CD4-positive, alpha-beta memory T cell (primary cell): ENCODE measurements at regions of chr6 and their contacts with region 1.

Region 1: GRCh38 chr6:17599885-17600526 is at the start of gene FAM8A1:
- DNase-seq: peak; percentile 92 to 94 (median 93)
- H3K4me3 ChIP-seq: peak within 1 kb of the TSS; percentile 50 to 64
- H3K4me3 Mint-ChIP-seq: peak within 1 kb of the TSS; percentile 88 to 96 (median 92)
- H3K27ac ChIP-seq: peak within 1 kb of the TSS; percentile 78
- H3K27ac Mint-ChIP-seq: peak within 1 kb of the TSS; percentile 81 to 96 (median 92)
- H3K4me1 ChIP-seq: peaks cover 42% of the 10 kb centered on the region
- H3K4me1 Mint-ChIP-seq: peaks cover 22 to 50% (median 35%) of the 10 kb centered on the region in 4 donors
- H3K27me3 ChIP-seq: no peaks in the 10 kb centered on the region
- H3K27me3 Mint-ChIP-seq: no peaks in the 10 kb centered on the region
- total RNA-seq, gene FAM8A1: 20.2 to 21.2 TPM

Region 2: DNA sequence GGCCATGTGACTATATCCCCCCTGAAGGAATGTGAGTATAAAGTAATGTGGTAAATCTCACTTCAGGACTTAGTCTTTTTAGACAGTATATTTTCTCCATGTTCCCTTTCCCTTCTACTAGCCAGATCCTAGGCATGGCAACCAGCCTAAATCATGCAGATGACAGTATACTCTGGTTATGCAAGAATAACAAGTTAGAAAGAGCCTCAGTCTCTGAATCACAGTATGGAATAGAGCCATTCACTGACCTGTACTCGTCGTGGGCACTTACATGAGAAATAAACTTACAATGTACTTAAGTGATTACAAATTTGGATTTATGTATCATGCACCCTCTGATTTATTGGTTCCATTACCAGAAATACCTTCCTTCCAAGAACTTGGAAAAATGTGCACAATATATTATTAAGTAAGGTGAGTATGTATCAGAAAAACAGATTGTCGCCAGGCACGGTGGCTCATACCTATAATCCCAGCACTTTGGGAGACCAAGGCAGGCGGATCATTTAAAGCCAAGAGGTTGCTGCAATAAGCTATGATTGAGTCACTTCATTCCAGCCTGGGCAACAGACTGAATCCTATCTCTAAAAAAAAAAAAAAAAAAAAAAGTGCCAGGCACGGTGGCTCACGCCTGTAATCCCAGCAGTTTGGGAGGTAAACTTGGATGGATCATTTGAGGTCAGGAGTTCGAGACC is 25.0 kb before region 1 on chr6:
- CTCF ChIA-PET with region 1: no interaction called
- POLR2A ChIA-PET with region 1: no interaction called
- intact Hi-C with region 1: no loop called
- DNase-seq: no peak
- H3K4me3 ChIP-seq: no peak overlapping the region
- H3K4me3 Mint-ChIP-seq: no peak overlapping the region
- H3K27ac ChIP-seq: no peak overlapping the region
- H3K27ac Mint-ChIP-seq: no peak overlapping the region
- H3K4me1 ChIP-seq: no peaks in the 10 kb centered on the region
- H3K4me1 Mint-ChIP-seq: no peaks in the 10 kb centered on the region
- H3K27me3 ChIP-seq: peaks cover 4% of the 10 kb centered on the region
- H3K27me3 Mint-ChIP-seq: peaks cover 13 to 19% of the 10 kb centered on the region in 2 donors

Region 3: GRCh38 chr6:17610835-17611234 is 10.8 kb after region 1 on chr6:
- CTCF ChIA-PET with region 1: interaction called, 16 read pairs
- POLR2A ChIA-PET with region 1: interaction called, 26 read pairs
- intact Hi-C with region 1: no loop called
- DNase-seq: no peak
- H3K4me3 ChIP-seq: no peak overlapping the region
- H3K4me3 Mint-ChIP-seq: no peak overlapping the region
- H3K27ac ChIP-seq: no peak overlapping the region
- H3K27ac Mint-ChIP-seq: peak overlapping the region in 3 of 7 donors; percentile 8 to 66 (median 60)
- H3K4me1 ChIP-seq: no peaks in the 10 kb centered on the region
- H3K4me1 Mint-ChIP-seq: peaks cover 0 to 10% (median 5%) of the 10 kb centered on the region in 4 donors
- H3K27me3 ChIP-seq: no peaks in the 10 kb centered on the region
- H3K27me3 Mint-ChIP-seq: no peaks in the 10 kb centered on the region

Region 4: GRCh38 chr6:17633465-17634188 is 33.6 kb after region 1 on chr6:
- CTCF ChIA-PET with region 1: interaction called, 7 read pairs
- POLR2A ChIA-PET with region 1: interaction called, 8 read pairs
- intact Hi-C with region 1: loop called (anchors 2 kb)
- DNase-seq: peak in 2 of 5 donors; percentile 11 to 46
- H3K4me3 ChIP-seq: no peak overlapping the region
- H3K4me3 Mint-ChIP-seq: peak overlapping the region in 7 of 8 donors; percentile 1 to 64 (median 42)
- H3K27ac ChIP-seq: no peak overlapping the region
- H3K27ac Mint-ChIP-seq: peak overlapping the region; percentile 27 to 87 (median 80)
- H3K4me1 ChIP-seq: peaks cover 32% of the 10 kb centered on the region
- H3K4me1 Mint-ChIP-seq: peaks cover 29 to 69% (median 45%) of the 10 kb centered on the region in 4 donors
- H3K27me3 ChIP-seq: no peaks in the 10 kb centered on the region
- H3K27me3 Mint-ChIP-seq: no peaks in the 10 kb centered on the region

Region 5: GRCh38 chr6:17673543-17674254 is 73.7 kb after region 1 on chr6:
- CTCF ChIA-PET with region 1: interaction called, 10 read pairs
- POLR2A ChIA-PET with region 1: no interaction called
- intact Hi-C with region 1: no loop called
- DNase-seq: no peak
- H3K4me3 ChIP-seq: no peak overlapping the region
- H3K4me3 Mint-ChIP-seq: no peak overlapping the region
- H3K27ac ChIP-seq: no peak overlapping the region
- H3K27ac Mint-ChIP-seq: peak overlapping the region in 6 of 7 donors; percentile 2 to 84 (median 50)
- H3K4me1 ChIP-seq: peaks cover 22% of the 10 kb centered on the region
- H3K4me1 Mint-ChIP-seq: peaks cover 19 to 47% (median 27%) of the 10 kb centered on the region in 4 donors
- H3K27me3 ChIP-seq: no peaks in the 10 kb centered on the region
- H3K27me3 Mint-ChIP-seq: no peaks in the 10 kb centered on the region

Region 6: DNA sequence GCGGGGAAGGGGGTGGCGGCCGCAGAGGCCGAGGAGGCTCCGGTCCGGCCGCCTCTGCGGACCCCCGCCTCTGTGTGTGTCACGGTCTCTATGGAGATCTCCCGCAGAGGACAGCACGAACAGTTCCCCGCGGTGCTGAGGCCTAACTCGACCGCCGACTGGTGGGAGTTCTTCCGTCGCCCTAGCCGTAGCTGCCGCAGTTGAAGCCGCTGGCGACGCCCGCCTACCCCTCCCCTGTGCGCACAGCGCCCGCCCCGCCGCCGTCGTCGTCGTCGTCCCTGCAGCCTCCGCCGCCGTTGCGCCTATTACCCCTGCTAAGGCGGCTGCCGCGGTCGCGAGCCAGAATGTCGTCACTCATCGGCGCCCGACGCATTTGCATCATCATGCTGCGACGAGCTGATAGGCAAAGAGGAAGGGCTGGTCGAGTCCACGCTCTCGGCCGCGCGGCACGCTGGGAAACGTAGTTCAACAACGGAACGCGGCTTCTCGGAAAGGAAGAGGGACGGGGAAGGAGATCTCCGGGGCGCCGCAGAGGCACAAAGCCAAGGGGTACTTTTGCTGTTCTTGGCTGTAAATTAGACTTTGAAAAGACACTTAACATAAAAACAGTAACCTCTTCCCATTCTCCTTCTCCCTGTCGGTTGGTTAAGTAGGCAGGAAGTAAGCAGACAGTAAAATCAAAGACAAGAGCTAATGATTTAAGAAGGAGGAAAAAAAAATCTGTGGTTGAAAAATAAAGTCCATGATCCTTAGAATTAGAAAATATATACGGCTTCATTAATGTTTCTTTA is 106.8 kb after region 1 on chr6 and contains the start of gene NUP153:
- CTCF ChIA-PET with region 1: interaction called, 25 read pairs
- POLR2A ChIA-PET with region 1: interaction called, 94 read pairs
- intact Hi-C with region 1: loop called (anchors 1 kb)
- DNase-seq: peak; percentile 99 to 100 (median 99)
- H3K4me3 ChIP-seq: peak within 1 kb of the TSS; percentile 74 to 87
- H3K4me3 Mint-ChIP-seq: peak within 1 kb of the TSS; percentile 86 to 96 (median 93)
- H3K27ac ChIP-seq: peak within 1 kb of the TSS; percentile 99
- H3K27ac Mint-ChIP-seq: peak within 1 kb of the TSS; percentile 93 to 99 (median 97)
- H3K4me1 ChIP-seq: peaks cover 42% of the 10 kb centered on the region
- H3K4me1 Mint-ChIP-seq: peaks cover 22 to 52% (median 35%) of the 10 kb centered on the region in 4 donors
- H3K27me3 ChIP-seq: no peaks in the 10 kb centered on the region
- H3K27me3 Mint-ChIP-seq: no peaks in the 10 kb centered on the region
- total RNA-seq, gene NUP153: 57.0 to 60.7 TPM

Region 7: DNA sequence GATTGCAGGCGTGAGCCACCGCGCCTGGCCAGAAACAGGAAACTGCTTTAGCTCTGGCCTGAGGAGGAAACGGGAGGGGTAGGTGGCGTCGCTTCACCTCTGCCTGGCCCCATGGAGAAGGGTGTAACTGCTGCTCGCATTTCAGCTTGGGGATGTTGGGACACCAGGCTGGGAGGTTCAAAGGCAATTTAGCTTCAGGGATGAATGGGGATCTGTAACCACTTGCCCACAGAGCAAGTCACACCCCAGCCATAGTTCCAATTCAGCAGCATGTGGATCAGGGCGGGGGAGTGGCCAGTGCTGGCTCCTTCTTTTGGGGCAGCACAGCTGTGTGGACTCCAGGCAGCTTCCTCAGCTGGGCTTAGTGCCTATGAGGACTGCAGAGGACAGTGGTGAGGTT is 141.5 kb after region 1 on chr6:
- CTCF ChIA-PET with region 1: no interaction called
- POLR2A ChIA-PET with region 1: no interaction called
- intact Hi-C with region 1: no loop called
- DNase-seq: no peak
- H3K4me3 ChIP-seq: no peak overlapping the region
- H3K4me3 Mint-ChIP-seq: no peak overlapping the region
- H3K27ac ChIP-seq: no peak overlapping the region
- H3K27ac Mint-ChIP-seq: no peak overlapping the region
- H3K4me1 ChIP-seq: no peaks in the 10 kb centered on the region
- H3K4me1 Mint-ChIP-seq: no peaks in the 10 kb centered on the region
- H3K27me3 ChIP-seq: no peaks in the 10 kb centered on the region
- H3K27me3 Mint-ChIP-seq: peaks cover 1 to 7% of the 10 kb centered on the region in 2 donors

Region 8: GRCh38 chr6:18081362-18082006 is 481.5 kb after region 1 on chr6:
- CTCF ChIA-PET with region 1: no interaction called
- POLR2A ChIA-PET with region 1: no interaction called
- intact Hi-C with region 1: no loop called
- DNase-seq: no peak
- H3K4me3 ChIP-seq: no peak overlapping the region
- H3K4me3 Mint-ChIP-seq: no peak overlapping the region
- H3K27ac ChIP-seq: no peak overlapping the region
- H3K27ac Mint-ChIP-seq: no peak overlapping the region
- H3K4me1 ChIP-seq: no peaks in the 10 kb centered on the region
- H3K4me1 Mint-ChIP-seq: no peaks in the 10 kb centered on the region
- H3K27me3 ChIP-seq: no peaks in the 10 kb centered on the region
- H3K27me3 Mint-ChIP-seq: peaks cover 5 to 16% of the 10 kb centered on the region in 2 donors

Region 9: DNA sequence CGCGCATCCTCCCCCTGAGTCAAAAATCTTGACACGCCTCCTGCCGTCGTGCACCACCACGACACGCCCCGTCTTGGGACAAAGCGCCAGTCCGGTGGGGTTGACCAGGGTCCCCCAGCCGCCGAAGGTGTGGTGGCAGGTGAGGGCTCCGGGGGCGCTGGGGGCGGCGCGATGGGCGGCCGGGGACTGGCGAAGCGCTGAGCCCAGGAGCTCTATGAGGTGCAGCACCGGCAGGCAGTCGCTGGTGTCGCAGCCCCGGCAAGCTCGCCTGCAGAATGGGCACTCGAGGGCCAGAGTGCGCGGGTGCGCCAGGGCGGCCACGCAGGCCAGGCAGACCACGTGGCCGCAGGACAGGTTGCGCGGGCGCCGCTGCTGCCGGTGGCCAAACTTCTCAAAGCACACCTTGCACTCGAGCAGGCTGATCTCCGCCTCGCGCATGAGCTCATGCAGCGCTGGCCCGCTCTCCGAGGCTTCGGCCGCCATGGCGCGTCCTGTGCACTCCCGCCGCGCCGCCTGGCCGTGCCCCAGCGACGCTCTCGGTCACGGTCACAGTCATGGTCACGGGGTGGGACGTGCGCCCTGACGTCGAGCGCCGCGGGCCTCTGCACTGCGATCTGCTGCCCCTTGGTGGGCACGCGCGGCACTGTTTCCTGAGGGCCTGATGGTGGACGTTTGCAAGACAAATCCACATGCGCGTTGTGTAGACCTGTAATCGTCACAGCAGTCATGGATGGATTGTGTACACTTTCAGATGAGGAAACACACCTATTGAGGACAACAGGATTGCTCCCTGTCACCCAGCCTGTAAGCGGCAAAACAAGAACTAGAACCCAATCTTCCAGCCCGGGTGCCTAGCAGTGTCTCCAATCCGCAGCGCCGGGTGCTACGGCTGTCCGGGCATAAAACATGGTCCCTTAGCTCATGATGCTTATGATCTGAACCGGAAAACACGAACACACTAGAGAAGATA is 522.4 kb after region 1 on chr6 and contains the start of gene NHLRC1:
- CTCF ChIA-PET with region 1: no interaction called
- POLR2A ChIA-PET with region 1: no interaction called
- intact Hi-C with region 1: no loop called
- DNase-seq: peak; percentile 44 to 69 (median 57)
- H3K4me3 ChIP-seq: peak within 1 kb of the TSS; percentile 26 to 37
- H3K4me3 Mint-ChIP-seq: peak within 1 kb of the TSS; percentile 75 to 91 (median 82)
- H3K27ac ChIP-seq: no peak within 1 kb of the TSS
- H3K27ac Mint-ChIP-seq: peak within 1 kb of the TSS in 4 of 7 donors; percentile 18 to 90 (median 31)
- H3K4me1 ChIP-seq: peaks cover 8% of the 10 kb centered on the region
- H3K4me1 Mint-ChIP-seq: peaks cover 5 to 17% (median 10%) of the 10 kb centered on the region in 4 donors
- H3K27me3 ChIP-seq: no peaks in the 10 kb centered on the region
- H3K27me3 Mint-ChIP-seq: peaks cover 1 to 9% of the 10 kb centered on the region in 2 donors
- total RNA-seq, gene NHLRC1: 1.1 TPM

Region 10: DNA sequence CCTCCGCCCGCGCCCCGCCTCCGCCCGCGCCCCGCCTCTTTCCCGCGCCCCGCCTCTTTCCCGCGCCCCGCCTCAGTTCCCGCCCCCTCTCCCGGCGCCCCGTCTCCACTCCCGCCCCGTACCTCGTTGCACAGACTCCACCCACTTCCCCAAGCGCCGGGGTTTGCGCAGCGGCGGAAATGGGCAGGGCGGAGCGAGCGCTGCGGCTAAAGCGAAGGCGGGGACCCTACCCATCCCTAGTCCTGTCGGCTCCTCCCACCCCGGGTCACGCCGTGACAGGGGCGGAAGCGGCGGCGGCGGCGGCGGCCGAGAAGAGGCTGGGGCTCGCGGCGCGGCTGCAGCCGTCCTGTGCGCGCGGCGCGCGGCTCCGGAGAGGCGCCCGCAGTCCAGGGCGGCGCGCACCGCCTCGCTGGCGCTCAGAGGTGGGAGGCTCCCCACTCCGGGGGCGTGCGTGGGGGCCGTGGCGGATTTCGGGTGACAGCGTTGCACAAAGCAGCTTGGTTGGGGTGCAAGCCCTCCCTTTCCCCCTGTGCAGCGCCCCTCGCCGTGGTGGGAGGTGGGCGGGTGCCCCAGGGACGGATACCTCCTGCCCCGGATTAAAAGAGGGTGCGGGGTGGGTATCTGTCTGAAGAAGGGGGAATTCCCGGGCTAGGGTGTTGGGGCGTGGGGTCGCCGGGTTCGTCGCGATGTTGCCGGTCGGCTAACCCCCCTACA is 555.3 kb after region 1 on chr6 and contains the start of gene KDM1B:
- CTCF ChIA-PET with region 1: no interaction called
- POLR2A ChIA-PET with region 1: interaction called, 7 read pairs
- intact Hi-C with region 1: loop called (anchors 1 kb)
- DNase-seq: peak; percentile 98 to 100 (median 99)
- H3K4me3 ChIP-seq: peak within 1 kb of the TSS; percentile 92 to 98
- H3K4me3 Mint-ChIP-seq: peak within 1 kb of the TSS; percentile 98 to 99 (median 99)
- H3K27ac ChIP-seq: peak within 1 kb of the TSS; percentile 83
- H3K27ac Mint-ChIP-seq: peak within 1 kb of the TSS; percentile 84 to 100 (median 99)
- H3K4me1 ChIP-seq: peaks cover 29% of the 10 kb centered on the region
- H3K4me1 Mint-ChIP-seq: peaks cover 17 to 36% (median 28%) of the 10 kb centered on the region in 4 donors
- H3K27me3 ChIP-seq: no peaks in the 10 kb centered on the region
- H3K27me3 Mint-ChIP-seq: no peaks in the 10 kb centered on the region
- total RNA-seq, gene KDM1B: 12.0 to 12.3 TPM